ENCODE measurements at regions of chr6 and their contacts with region 1.

Region 1: GRCh38 chr6:145734486-145735355 is 599 bp downstream of the EPM2A start:
- DNase-seq: peak; percentile 77
- ATAC-seq: peak; percentile 84
- H3K4me3 Mint-ChIP-seq: peak overlapping the region; percentile 85
- H3K27ac Mint-ChIP-seq: peak overlapping the region; percentile 93
- H3K4me1 Mint-ChIP-seq: peaks cover 26% of the 10 kb centered on the region
- H3K27me3 Mint-ChIP-seq: no peaks in the 10 kb centered on the region

Region 2: GRCh38 chr6:145669627-145670034 is 65.1 kb before region 1 on chr6:
- CTCF ChIA-PET with region 1: no interaction called
- POLR2A ChIA-PET with region 1: no interaction called
- DNase-seq: no peak
- ATAC-seq: no peak
- H3K4me3 Mint-ChIP-seq: no peak overlapping the region
- H3K27ac Mint-ChIP-seq: no peak overlapping the region
- H3K4me1 Mint-ChIP-seq: peaks cover 6% of the 10 kb centered on the region
- H3K27me3 Mint-ChIP-seq: no peaks in the 10 kb centered on the region

Region 3: GRCh38 chr6:145963216-145964068 is 228.7 kb after region 1 on chr6:
- CTCF ChIA-PET with region 1: no interaction called
- POLR2A ChIA-PET with region 1: interaction called, 14 read pairs
- DNase-seq: peak; percentile 51
- ATAC-seq: peak; percentile 51
- H3K4me3 Mint-ChIP-seq: peak overlapping the region; percentile 97
- H3K27ac Mint-ChIP-seq: peak overlapping the region; percentile 93
- H3K4me1 Mint-ChIP-seq: peaks cover 28% of the 10 kb centered on the region
- H3K27me3 Mint-ChIP-seq: no peaks in the 10 kb centered on the region